ENCODE measurements at regions of chr1 and their contacts with region 1.

Region 1: DNA sequence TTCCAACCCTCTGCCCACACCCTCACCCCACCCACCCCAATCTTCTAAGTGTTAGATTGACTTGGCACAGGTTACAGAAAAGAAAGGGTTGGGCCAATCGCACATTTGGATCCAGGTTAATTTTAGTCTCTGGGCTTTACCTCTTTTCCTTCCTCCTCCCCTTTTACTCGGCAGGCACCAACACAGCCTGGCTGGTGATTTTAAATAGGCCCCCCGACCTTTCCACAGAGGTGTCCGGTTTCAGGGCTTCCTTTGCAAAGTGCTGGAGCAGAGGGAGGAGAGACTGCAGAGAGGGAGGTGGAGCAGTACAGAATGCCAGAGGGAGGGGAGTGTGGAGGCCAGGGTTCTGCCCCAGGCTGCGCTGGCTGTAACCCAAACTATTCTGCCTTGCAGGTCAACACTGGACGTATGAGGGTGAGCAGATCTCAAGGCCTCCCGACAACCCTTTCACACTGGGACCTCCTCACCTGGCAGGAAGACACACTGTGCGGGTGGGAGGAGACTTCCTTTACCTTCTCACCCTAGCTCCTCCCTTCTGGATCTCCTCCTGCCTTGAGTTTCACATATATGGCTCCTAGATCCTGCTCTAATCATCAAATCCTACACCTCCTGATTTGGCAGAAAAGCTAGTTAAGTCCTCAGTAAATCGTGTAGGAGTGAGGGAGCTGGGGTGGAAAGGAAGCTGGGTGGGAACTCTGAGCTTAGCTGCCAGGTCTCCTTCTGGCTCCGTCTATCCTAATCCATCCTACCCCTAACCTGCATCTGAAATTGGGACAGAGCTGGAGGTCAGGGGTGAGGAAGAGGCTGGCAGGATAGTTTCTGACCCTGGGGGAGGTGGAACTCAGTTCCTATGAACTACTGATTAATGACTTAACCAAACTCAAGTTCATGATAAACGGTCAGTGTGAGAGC is 2.4 kb downstream of the CA14 start:
- H3K4me3 Mint-ChIP-seq: no peak overlapping the region
- H3K27ac Mint-ChIP-seq: no peak overlapping the region
- H3K4me1 Mint-ChIP-seq: peaks cover 39% of the 10 kb centered on the region
- H3K27me3 Mint-ChIP-seq: peaks cover 50% of the 10 kb centered on the region

Region 2: GRCh38 chr1:150281837-150282653 is 22.0 kb after region 1 on chr1 and contains the start of gene CIART:
- intact Hi-C with region 1: loop called (anchors 1 kb)
- H3K4me3 Mint-ChIP-seq: peak within 1 kb of the TSS; percentile 71
- H3K27ac Mint-ChIP-seq: peak within 1 kb of the TSS; percentile 61
- H3K4me1 Mint-ChIP-seq: peaks cover 40% of the 10 kb centered on the region
- H3K27me3 Mint-ChIP-seq: peaks cover 59% of the 10 kb centered on the region

Region 3: GRCh38 chr1:150321826-150322166 is 61.8 kb after region 1 on chr1:
- intact Hi-C with region 1: loop called (anchors 1 kb)
- H3K4me3 Mint-ChIP-seq: peak overlapping the region; percentile 97
- H3K27ac Mint-ChIP-seq: peak overlapping the region; percentile 94
- H3K4me1 Mint-ChIP-seq: peaks cover 21% of the 10 kb centered on the region
- H3K27me3 Mint-ChIP-seq: no peaks in the 10 kb centered on the region

Region 4: GRCh38 chr1:150429805-150430204 is 169.8 kb after region 1 on chr1:
- intact Hi-C with region 1: loop called (anchors 10 kb)
- H3K4me3 Mint-ChIP-seq: no peak overlapping the region
- H3K27ac Mint-ChIP-seq: no peak overlapping the region
- H3K4me1 Mint-ChIP-seq: no peaks in the 10 kb centered on the region
- H3K27me3 Mint-ChIP-seq: no peaks in the 10 kb centered on the region

Measured in dendritic cell treated with granulocyte-macrophage colony-stimulating factor and Interleukin-4, amounts not matched to agents 40 ng/mL and 50 ng/mL, for 4 days (primary cell).